PC-9 (cell line): ENCODE measurements at regions of chr2 and their contacts with region 1.

Region 1: GRCh38 chr2:217331523-217332139 is 471.8 kb upstream of the TNP1 start:
- DNase-seq: peak; percentile 88 to 99
- H3K4me3 ChIP-seq: no peak overlapping the region
- H3K27ac ChIP-seq: peak overlapping the region; percentile 79
- H3K4me1 ChIP-seq: peaks cover 90% of the 10 kb centered on the region
- H3K27me3 ChIP-seq: no peaks in the 10 kb centered on the region
- CTCF ChIP-seq: no peak

Region 2: DNA sequence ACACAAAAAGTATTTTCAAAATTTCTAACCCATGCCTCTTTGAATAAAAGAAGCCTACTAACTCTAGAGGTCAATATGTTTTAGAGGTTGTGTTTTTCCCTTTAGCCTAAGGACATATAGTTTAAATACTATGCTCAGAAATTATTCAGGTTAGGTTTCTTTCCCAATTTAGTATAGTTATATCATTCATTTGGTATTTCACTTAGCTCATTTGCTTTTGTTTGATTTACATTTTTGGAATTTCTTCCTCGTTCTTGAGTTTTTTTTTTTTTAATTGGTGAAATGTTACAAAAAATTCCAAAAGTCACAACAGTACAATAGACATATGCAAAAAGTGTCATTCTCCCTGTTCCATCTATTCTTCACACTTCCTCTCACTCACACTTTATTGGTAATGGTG is 100.4 kb before region 1 on chr2:
- CTCF ChIA-PET with region 1: no interaction called
- POLR2A ChIA-PET with region 1: no interaction called
- intact Hi-C with region 1: loop called (anchors 2 kb)
- DNase-seq: peak in 1 of 2 experiments; percentile 88
- H3K4me3 ChIP-seq: no peak overlapping the region
- H3K27ac ChIP-seq: peak overlapping the region; percentile 70
- H3K4me1 ChIP-seq: peaks cover 33% of the 10 kb centered on the region
- H3K27me3 ChIP-seq: no peaks in the 10 kb centered on the region
- CTCF ChIP-seq: no peak

Region 3: DNA sequence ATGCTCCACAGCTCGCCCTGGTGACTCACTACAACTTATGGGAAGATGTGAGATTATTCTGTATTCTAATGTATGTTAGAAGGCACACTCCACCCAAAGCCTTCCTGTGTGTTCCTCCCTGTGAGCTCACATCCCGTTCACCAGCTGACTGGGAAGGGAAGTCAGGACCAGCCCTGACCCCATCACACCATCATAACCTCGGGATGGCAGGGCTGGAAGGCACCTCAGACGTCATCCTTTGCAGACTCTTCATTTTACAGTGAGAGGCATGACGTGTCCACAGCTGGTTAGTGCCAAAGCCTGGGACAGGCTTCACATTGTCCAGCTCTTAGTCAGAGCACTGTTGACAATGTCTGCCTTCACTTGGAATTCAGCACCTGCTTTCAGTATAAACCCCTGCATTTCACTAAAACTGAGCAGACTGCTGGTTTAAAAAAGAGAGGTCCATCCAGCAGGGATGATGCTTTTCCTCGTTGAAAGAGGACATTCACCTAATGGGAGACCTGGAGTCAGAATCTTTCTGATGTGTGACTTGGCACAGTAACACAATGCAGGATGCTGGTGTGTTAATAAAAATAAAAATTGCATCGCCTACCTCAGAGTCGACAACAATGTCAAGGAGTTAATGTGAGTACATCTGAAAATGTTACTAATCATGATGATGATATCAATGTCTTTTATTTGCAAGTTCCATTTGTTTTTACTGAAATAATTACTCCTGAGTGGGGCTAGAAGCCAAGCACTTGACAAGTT is 53.8 kb before region 1 on chr2:
- CTCF ChIA-PET with region 1: no interaction called
- POLR2A ChIA-PET with region 1: interaction called, 3 read pairs
- intact Hi-C with region 1: loop called (anchors 1 kb)
- DNase-seq: peak; percentile 66 to 74
- H3K4me3 ChIP-seq: no peak overlapping the region
- H3K27ac ChIP-seq: peak overlapping the region; percentile 25; the same call in 1 of the 2 replicates
- H3K4me1 ChIP-seq: peaks cover 25% of the 10 kb centered on the region; the same call in 1 of the 2 replicates
- H3K27me3 ChIP-seq: no peaks in the 10 kb centered on the region
- CTCF ChIP-seq: no peak

Region 4: DNA sequence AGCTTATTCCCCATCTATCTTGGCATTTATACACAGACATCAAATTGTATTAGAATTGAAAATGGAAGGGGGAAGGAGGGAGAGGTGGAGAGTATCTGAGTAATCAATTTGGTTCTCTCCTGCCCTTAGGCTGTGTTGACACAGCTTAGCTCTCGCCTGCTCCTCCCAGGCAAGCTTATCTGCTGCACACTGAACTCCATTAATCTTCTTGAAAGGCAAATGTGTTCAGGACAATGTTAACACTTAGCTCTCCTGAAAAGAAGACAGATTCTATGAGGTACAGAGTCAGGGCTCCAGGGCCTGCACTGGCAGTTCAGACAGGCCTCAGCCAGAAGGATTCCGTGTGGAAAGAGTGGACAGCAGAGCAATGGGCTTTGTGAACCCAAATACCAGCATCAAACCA is 41.8 kb before region 1 on chr2:
- CTCF ChIA-PET with region 1: no interaction called
- POLR2A ChIA-PET with region 1: interaction called, 3 read pairs
- intact Hi-C with region 1: loop called (anchors 1 kb)
- DNase-seq: peak; percentile 45 to 89
- H3K4me3 ChIP-seq: no peak overlapping the region
- H3K27ac ChIP-seq: peak overlapping the region; percentile 25
- H3K4me1 ChIP-seq: peaks cover 40% of the 10 kb centered on the region
- H3K27me3 ChIP-seq: no peaks in the 10 kb centered on the region
- CTCF ChIP-seq: no peak

Region 5: GRCh38 chr2:217360781-217361482 is 29.3 kb after region 1 on chr2:
- CTCF ChIA-PET with region 1: no interaction called
- POLR2A ChIA-PET with region 1: no interaction called
- intact Hi-C with region 1: loop called (anchors 1 kb)
- DNase-seq: peak; percentile 37 to 89
- H3K4me3 ChIP-seq: no peak overlapping the region
- H3K27ac ChIP-seq: peak overlapping the region; percentile 55
- H3K4me1 ChIP-seq: peaks cover 49% of the 10 kb centered on the region
- H3K27me3 ChIP-seq: no peaks in the 10 kb centered on the region
- CTCF ChIP-seq: no peak

Region 6: DNA sequence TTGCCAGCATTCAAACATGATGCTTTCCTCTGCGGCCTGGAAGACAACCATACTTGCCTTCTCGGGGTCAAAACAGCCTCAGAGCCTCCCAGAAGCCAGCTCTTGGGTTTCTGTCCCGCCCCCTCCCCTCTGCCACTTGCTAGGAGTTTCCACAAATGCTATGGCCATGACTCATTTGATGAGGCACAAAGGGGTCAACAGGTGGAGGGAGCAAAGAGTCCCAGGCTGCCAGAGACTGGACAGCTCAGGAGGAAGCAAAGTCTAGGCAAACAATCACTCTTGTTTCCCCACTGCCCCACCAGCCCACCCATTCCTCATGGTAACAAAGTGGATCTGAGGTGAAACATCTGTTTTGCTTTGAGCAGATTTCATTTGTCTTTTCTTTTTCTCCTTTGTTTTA is 120.0 kb after region 1 on chr2:
- CTCF ChIA-PET with region 1: no interaction called
- POLR2A ChIA-PET with region 1: interaction called, 3 read pairs
- intact Hi-C with region 1: loop called (anchors 2 kb)
- DNase-seq: peak; percentile 57 to 78
- H3K4me3 ChIP-seq: no peak overlapping the region
- H3K27ac ChIP-seq: peak overlapping the region; percentile 58
- H3K4me1 ChIP-seq: peaks cover 18% of the 10 kb centered on the region
- H3K27me3 ChIP-seq: no peaks in the 10 kb centered on the region
- CTCF ChIP-seq: no peak